WTC11 (cell line): ENCODE measurements at regions of chr11 and their contacts with region 1.

Region 1: DNA sequence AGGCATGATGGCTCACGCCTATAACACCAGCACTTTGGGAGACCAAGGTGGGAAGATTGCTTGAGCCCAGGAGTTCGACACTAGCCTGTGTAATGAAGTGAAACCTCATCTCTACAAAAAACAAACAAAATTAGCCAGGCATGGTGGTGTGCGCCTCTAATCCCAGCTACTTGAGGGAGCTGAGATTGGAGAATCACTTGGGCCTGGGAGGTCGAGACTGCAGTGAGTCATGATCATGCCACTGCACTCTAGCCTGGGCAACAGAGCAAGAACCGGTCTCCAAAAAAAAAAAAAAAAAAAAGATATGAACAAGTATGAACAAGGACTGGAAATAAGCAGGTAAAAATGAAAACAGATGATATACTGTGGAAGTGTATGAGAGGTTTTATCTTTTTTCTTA is 54.1 kb upstream of the SOX6 start:
- DNase-seq: no peak
- ATAC-seq: no peak
- H3K4me3 Mint-ChIP-seq: no peak overlapping the region
- H3K27ac Mint-ChIP-seq: no peak overlapping the region
- H3K4me1 Mint-ChIP-seq: peaks cover 5% of the 10 kb centered on the region
- H3K27me3 Mint-ChIP-seq: peaks cover 88% of the 10 kb centered on the region
- CTCF ChIP-seq: no peak

Region 2: GRCh38 chr11:16261836-16262644 is 148.4 kb before region 1 on chr11:
- CTCF ChIA-PET with region 1: no interaction called
- POLR2A ChIA-PET with region 1: no interaction called
- DNase-seq: no peak
- ATAC-seq: no peak
- H3K4me3 Mint-ChIP-seq: no peak overlapping the region
- H3K27ac Mint-ChIP-seq: no peak overlapping the region
- H3K4me1 Mint-ChIP-seq: no peaks in the 10 kb centered on the region
- H3K27me3 Mint-ChIP-seq: no peaks in the 10 kb centered on the region
- CTCF ChIP-seq: no peak

Region 3: GRCh38 chr11:16326679-16327297 is 83.7 kb before region 1 on chr11:
- CTCF ChIA-PET with region 1: no interaction called
- POLR2A ChIA-PET with region 1: no interaction called
- DNase-seq: no peak
- ATAC-seq: no peak
- H3K4me3 Mint-ChIP-seq: no peak overlapping the region
- H3K27ac Mint-ChIP-seq: no peak overlapping the region
- H3K4me1 Mint-ChIP-seq: no peaks in the 10 kb centered on the region
- H3K27me3 Mint-ChIP-seq: no peaks in the 10 kb centered on the region
- CTCF ChIP-seq: no peak

Region 4: GRCh38 chr11:16526947-16527346 is 116.5 kb after region 1 on chr11:
- CTCF ChIA-PET with region 1: no interaction called
- POLR2A ChIA-PET with region 1: no interaction called
- DNase-seq: no peak
- ATAC-seq: no peak
- H3K4me3 Mint-ChIP-seq: no peak overlapping the region
- H3K27ac Mint-ChIP-seq: no peak overlapping the region
- H3K4me1 Mint-ChIP-seq: no peaks in the 10 kb centered on the region
- H3K27me3 Mint-ChIP-seq: peaks cover 15% of the 10 kb centered on the region; the same call in 1 of the 2 replicates
- CTCF ChIP-seq: no peak

Region 5: GRCh38 chr11:16587670-16588069 is 177.2 kb after region 1 on chr11:
- CTCF ChIA-PET with region 1: no interaction called
- POLR2A ChIA-PET with region 1: interaction called, 10 read pairs
- DNase-seq: no peak
- ATAC-seq: no peak
- H3K4me3 Mint-ChIP-seq: no peak overlapping the region
- H3K27ac Mint-ChIP-seq: no peak overlapping the region
- H3K4me1 Mint-ChIP-seq: no peaks in the 10 kb centered on the region
- H3K27me3 Mint-ChIP-seq: peaks cover 4% of the 10 kb centered on the region
- CTCF ChIP-seq: no peak